ENCODE measurements at regions of chr5 and their contacts with region 1.

Region 1: GRCh38 chr5:75574791-75575190 is 36.5 kb upstream of the ANKDD1B start:
- DNase-seq: no peak
- ATAC-seq: no peak
- H3K4me3 ChIP-seq: no peak overlapping the region
- H3K27ac ChIP-seq: no peak overlapping the region
- H3K4me1 ChIP-seq: peaks cover 6% of the 10 kb centered on the region
- H3K27me3 ChIP-seq: no peaks in the 10 kb centered on the region

Region 2: GRCh38 chr5:75681125-75681830 is 106.5 kb after region 1 on chr5:
- intact Hi-C with region 1: loop called in 1 of 4 experiments (anchors 5 kb)
- DNase-seq: no peak
- ATAC-seq: no peak
- H3K4me3 ChIP-seq: no peak overlapping the region
- H3K27ac ChIP-seq: no peak overlapping the region
- H3K4me1 ChIP-seq: no peaks in the 10 kb centered on the region
- H3K27me3 ChIP-seq: no peaks in the 10 kb centered on the region